CD4-positive, alpha-beta T cell (primary cell): ENCODE measurements at regions of chr16 and their contacts with region 1.

Region 1: GRCh38 chr16:2155091-2156021 is at the start of gene TRAF7:
- DNase-seq: peak; percentile 93 to 100 (median 95)
- ATAC-seq: peak; percentile 90
- H3K4me3 ChIP-seq: peak within 1 kb of the TSS; percentile 83
- H3K4me3 Mint-ChIP-seq: peak within 1 kb of the TSS; percentile 94
- H3K27ac ChIP-seq: peak within 1 kb of the TSS; percentile 64 to 68
- H3K27ac Mint-ChIP-seq: peak within 1 kb of the TSS; percentile 75
- H3K4me1 ChIP-seq: peaks cover 79% of the 10 kb centered on the region
- H3K4me1 Mint-ChIP-seq: peaks cover 51% of the 10 kb centered on the region
- H3K27me3 ChIP-seq: no peaks in the 10 kb centered on the region
- H3K27me3 Mint-ChIP-seq: no peaks in the 10 kb centered on the region
- CTCF ChIP-seq: no peak
- total RNA-seq, gene TRAF7: 19.9 to 24.0 TPM

Region 2: DNA sequence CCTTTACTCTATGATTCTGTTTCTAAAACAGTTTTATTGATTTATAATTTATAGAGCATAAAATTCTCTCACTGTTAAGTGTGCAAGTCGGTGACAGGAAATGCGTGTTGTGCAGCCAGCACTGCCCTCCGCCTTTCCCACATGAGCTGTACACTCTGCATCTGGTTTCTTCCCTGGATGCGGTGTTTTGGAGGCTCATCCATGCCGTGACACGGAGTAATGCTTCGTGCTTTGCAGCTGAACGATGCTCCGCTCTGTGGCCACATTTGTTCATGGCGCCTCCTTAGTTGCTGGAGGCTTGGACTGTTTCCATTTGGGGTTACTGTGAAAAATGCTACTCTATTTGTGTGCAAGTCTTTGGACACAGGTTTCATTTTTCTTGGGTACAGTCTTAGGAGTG is 354.7 kb before region 1 on chr16:
- CTCF ChIA-PET with region 1: no interaction called
- POLR2A ChIA-PET with region 1: no interaction called
- intact Hi-C with region 1: no loop called
- DNase-seq: no peak
- ATAC-seq: no peak
- H3K4me3 ChIP-seq: no peak overlapping the region
- H3K4me3 Mint-ChIP-seq: no peak overlapping the region
- H3K27ac ChIP-seq: no peak overlapping the region
- H3K27ac Mint-ChIP-seq: no peak overlapping the region
- H3K4me1 ChIP-seq: no peaks in the 10 kb centered on the region
- H3K4me1 Mint-ChIP-seq: no peaks in the 10 kb centered on the region
- H3K27me3 ChIP-seq: no peaks in the 10 kb centered on the region
- H3K27me3 Mint-ChIP-seq: no peaks in the 10 kb centered on the region
- CTCF ChIP-seq: no peak

Region 3: DNA sequence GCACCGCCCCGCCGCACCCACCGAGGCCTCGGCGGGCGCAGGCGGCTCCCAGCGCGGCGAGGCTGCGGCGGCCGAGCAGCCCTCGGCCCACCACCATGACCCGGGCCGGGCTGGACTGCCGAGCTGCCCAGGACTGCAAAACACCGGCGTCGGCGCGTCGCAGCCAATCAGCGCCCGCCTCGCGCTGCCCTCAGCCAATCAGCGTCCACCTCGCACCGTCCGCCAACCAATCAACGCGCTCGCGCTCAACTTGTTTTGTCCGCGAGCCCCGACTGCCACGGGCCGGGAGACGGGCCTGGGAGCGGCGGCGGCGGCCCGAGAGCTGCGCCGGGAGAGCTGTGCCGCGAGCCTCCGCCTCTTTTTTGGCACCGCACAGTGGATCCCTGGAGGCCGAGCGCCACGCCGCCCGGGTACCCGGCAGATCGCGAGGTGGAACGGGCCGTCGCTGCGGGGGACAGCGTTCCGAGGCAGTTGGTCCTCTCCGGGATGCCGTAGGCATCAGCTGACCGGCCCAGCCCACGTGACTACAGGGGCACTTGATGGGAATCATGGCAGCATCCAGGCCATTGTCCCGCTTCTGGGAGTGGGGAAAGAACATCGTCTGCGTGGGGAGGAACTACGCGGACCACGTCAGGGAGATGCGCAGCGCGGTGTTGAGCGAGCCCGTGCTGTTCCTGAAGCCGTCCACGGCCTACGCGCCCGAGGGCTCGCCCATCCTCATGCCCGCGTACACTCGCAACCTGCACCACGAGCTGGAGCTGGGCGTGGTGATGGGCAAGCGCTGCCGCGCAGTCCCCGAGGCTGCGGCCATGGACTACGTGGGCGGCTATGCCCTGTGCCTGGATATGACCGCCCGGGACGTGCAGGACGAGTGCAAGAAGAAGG is 328.4 kb before region 1 on chr16 and contains the starts of genes FAHD1 and HAGH:
- CTCF ChIA-PET with region 1: no interaction called
- POLR2A ChIA-PET with region 1: interaction called, 13 read pairs
- intact Hi-C with region 1: no loop called
- DNase-seq: peak; percentile 82 to 97 (median 88)
- ATAC-seq: peak; percentile 82
- H3K4me3 ChIP-seq: peak within 1 kb of the TSS; percentile 76
- H3K4me3 Mint-ChIP-seq: peak within 1 kb of the TSS; percentile 91
- H3K27ac ChIP-seq: peak within 1 kb of the TSS; percentile 72 to 77
- H3K27ac Mint-ChIP-seq: peak within 1 kb of the TSS; percentile 90
- H3K4me1 ChIP-seq: peaks cover 51% of the 10 kb centered on the region
- H3K4me1 Mint-ChIP-seq: peaks cover 37% of the 10 kb centered on the region
- H3K27me3 ChIP-seq: no peaks in the 10 kb centered on the region
- H3K27me3 Mint-ChIP-seq: no peaks in the 10 kb centered on the region
- CTCF ChIP-seq: no peak
- total RNA-seq, gene FAHD1: 4.1 to 4.5 TPM
- total RNA-seq, gene HAGH: 20.9 to 22.7 TPM

Region 4: DNA sequence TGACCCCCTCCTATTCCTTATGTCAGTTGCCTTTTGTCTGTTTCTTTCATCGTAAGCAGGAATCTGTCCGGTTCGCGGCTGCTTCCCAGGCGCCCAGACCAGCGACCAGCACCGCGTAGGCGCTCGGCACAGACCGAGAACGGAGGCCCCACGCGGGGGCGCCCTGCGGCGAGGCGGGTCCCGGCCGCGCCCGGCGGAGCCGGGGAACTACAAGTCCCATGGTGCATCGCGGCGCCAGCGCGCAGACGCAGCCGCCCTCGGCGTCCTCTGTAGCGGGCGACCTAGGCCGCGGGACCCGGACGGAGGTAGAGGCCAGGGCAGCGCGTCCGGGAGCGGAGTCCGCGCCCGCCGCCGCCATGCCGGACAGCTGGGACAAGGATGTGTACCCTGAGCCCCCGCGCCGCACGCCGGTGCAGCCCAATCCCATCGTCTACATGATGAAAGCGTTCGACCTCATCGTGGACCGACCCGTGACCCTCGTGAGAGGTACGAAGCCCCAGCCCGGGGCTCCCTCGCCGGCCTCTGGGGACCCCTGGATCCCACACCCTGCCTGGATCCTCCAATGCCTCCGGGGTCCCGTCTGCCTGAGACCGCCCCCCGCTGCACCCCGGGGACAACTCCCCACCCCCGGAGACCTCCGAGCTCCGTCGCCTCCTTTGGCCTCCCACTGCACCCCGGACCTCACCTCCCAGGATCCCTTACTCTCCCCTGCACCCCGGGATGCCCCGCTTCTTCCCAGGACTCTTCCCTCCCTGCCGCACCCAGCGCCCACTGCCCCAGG is 195.9 kb before region 1 on chr16 and contains the start of gene NDUFB10:
- CTCF ChIA-PET with region 1: interaction called, 4 read pairs
- POLR2A ChIA-PET with region 1: interaction called, 41 read pairs
- intact Hi-C with region 1: loop called in 1 of 2 experiments (anchors 1 kb)
- DNase-seq: peak; percentile 81 to 96 (median 92)
- ATAC-seq: peak; percentile 86
- H3K4me3 ChIP-seq: peak within 1 kb of the TSS; percentile 94
- H3K4me3 Mint-ChIP-seq: peak within 1 kb of the TSS; percentile 91
- H3K27ac ChIP-seq: peak within 1 kb of the TSS; percentile 66 to 72
- H3K27ac Mint-ChIP-seq: peak within 1 kb of the TSS; percentile 98
- H3K4me1 ChIP-seq: peaks cover 55% of the 10 kb centered on the region
- H3K4me1 Mint-ChIP-seq: peaks cover 42% of the 10 kb centered on the region
- H3K27me3 ChIP-seq: no peaks in the 10 kb centered on the region
- H3K27me3 Mint-ChIP-seq: no peaks in the 10 kb centered on the region
- CTCF ChIP-seq: peak; percentile 83
- total RNA-seq, gene NDUFB10: 40.7 to 41.1 TPM

Region 5: DNA sequence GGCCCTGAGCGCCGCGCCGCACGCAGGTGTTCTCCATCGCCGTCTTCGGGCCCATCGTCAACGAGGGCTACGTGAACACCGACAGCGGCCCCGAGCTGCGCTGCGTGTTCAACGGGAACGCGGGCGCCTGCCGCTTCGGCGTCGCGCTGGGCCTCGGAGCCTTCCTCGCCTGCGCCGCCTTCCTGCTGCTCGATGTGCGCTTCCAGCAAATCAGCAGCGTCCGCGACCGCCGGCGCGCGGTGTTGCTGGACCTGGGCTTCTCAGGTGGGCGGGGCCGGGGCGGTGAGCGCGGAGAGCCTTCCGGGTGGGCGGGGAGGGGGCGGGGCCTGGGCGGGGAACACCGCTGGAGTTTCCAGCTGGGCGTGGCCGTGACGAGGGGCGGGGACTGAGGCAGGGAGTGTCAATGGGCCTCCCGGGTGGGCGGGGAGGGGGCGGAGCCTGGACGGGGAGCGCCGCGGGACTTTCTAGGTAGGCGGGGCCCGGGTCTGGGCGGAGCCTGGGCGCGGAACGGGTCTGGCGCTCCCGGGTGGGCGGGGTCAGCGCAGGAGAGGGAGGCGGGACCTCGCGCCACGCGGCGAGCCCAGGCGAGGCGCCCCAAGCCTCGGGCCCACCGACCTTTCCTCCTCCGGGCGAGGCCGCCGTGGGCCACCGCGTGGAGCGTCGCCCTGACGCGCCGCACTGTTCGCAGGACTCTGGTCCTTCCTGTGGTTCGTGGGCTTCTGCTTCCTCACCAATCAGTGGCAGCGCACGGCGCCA is 163.2 kb before region 1 on chr16:
- CTCF ChIA-PET with region 1: no interaction called
- POLR2A ChIA-PET with region 1: interaction called, 27 read pairs
- intact Hi-C with region 1: no loop called
- DNase-seq: peak; percentile 95 to 100 (median 98)
- ATAC-seq: peak; percentile 86
- H3K4me3 ChIP-seq: peak overlapping the region; percentile 55
- H3K4me3 Mint-ChIP-seq: peak overlapping the region; percentile 65
- H3K27ac ChIP-seq: peak overlapping the region in 1 of 2 donors; percentile 56
- H3K27ac Mint-ChIP-seq: peak overlapping the region; percentile 79
- H3K4me1 ChIP-seq: peaks cover 26% of the 10 kb centered on the region
- H3K4me1 Mint-ChIP-seq: peaks cover 26% of the 10 kb centered on the region
- H3K27me3 ChIP-seq: peaks cover 13 to 15% of the 10 kb centered on the region in 2 experiments
- H3K27me3 Mint-ChIP-seq: peaks cover 20% of the 10 kb centered on the region
- CTCF ChIP-seq: no peak

Region 6: DNA sequence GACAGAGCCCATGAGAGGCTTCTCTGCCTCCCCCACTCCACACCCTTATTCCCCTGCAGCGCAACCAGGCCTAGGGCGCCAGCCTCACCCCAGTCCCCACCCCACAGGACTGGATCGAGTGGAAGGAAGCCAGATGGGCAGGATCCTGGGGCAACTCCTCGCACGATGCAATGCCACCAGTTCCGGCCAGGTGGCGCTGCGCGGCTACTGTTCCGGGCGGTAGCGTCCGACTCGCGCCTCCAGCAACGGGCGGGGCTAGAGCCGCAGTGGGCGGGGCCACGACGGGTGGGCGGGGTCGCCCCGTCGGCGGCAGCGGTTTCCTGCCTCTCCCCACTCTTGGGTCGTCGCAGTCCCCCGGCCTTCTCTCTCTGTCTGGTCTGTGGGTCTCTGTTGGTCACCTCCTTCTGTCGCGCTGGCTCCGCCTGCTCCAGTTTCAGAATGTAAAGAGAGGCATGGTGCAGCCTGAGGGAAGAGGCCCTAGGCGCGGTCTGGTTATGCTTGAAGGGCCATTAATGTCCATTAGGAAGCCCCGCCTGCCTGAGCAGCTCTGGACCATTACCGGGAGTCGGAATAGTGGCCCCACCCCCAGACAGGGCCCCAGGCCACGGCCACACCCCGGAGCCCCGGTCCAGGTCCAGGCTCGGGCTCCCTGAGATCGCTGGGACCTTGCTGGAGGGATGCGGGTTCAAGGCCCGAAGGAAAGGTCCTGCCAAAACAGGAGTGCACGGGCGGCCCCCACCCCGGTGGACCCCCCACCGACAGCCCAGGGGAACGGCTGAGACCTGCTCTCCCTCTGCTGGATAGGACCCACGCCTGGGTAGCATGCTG is 132.0 kb before region 1 on chr16:
- CTCF ChIA-PET with region 1: interaction called, 5 read pairs
- POLR2A ChIA-PET with region 1: interaction called, 13 read pairs
- intact Hi-C with region 1: loop called (anchors 1 kb)
- DNase-seq: peak; percentile 87 to 99 (median 96)
- ATAC-seq: peak; percentile 92
- H3K4me3 ChIP-seq: peak overlapping the region; percentile 31
- H3K4me3 Mint-ChIP-seq: peak overlapping the region; percentile 72
- H3K27ac ChIP-seq: peak overlapping the region in 1 of 2 donors; percentile 43
- H3K27ac Mint-ChIP-seq: peak overlapping the region; percentile 66
- H3K4me1 ChIP-seq: peaks cover 50% of the 10 kb centered on the region
- H3K4me1 Mint-ChIP-seq: peaks cover 19% of the 10 kb centered on the region
- H3K27me3 ChIP-seq: peaks cover 25 to 33% of the 10 kb centered on the region in 2 experiments
- H3K27me3 Mint-ChIP-seq: peaks cover 29% of the 10 kb centered on the region
- CTCF ChIP-seq: peak; percentile 90

Region 7: DNA sequence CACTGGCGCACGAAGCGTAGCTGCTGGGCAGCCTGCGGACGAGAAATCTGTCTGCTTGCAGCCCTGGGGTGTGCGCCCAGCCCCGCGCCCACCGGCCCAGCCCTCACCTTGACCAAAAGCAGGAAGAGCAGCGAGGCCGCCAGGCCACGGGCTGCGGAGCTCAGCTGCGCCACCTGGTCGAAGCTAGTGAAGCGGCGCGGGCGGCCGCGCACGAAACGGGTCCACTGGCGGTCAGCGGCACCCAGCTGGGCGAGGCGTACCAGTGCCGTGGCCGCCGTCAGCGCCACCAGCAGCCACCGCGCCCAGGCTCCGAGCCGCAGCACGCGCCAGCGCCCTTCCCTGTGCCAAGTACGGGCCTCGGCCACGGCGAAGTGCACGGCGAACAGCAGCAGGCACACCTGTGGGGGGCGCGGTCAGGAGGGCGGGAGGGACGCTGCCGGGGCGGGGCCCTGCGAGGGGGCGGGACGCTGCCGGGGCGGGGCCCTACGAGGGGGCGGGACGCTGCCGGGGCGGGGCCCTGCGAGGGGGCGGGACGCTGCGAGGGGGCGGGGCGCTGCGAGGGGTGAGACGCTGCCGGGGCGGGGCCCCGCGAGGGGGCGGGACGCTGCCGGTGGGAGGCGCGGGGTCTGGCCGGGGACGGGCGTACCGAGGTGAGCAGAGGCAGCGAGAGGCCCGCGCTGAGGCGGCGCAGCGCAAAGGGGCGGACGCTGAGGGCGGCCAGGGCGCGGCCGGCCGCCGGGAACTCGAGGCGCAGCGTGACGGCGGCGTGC is 64.4 kb before region 1 on chr16:
- CTCF ChIA-PET with region 1: no interaction called
- POLR2A ChIA-PET with region 1: no interaction called
- intact Hi-C with region 1: no loop called
- DNase-seq: peak in 5 of 14 experiments; percentile 13 to 56 (median 40)
- ATAC-seq: no peak
- H3K4me3 ChIP-seq: no peak overlapping the region
- H3K4me3 Mint-ChIP-seq: no peak overlapping the region
- H3K27ac ChIP-seq: no peak overlapping the region
- H3K27ac Mint-ChIP-seq: no peak overlapping the region
- H3K4me1 ChIP-seq: no peaks in the 10 kb centered on the region
- H3K4me1 Mint-ChIP-seq: no peaks in the 10 kb centered on the region
- H3K27me3 ChIP-seq: no peaks in the 10 kb centered on the region
- H3K27me3 Mint-ChIP-seq: no peaks in the 10 kb centered on the region
- CTCF ChIP-seq: no peak

Region 8: GRCh38 chr16:2213817-2214720 is 58.7 kb after region 1 on chr16:
- CTCF ChIA-PET with region 1: interaction called, 5 read pairs
- POLR2A ChIA-PET with region 1: interaction called, 22 read pairs
- intact Hi-C with region 1: no loop called
- DNase-seq: no peak
- ATAC-seq: no peak
- H3K4me3 ChIP-seq: peak overlapping the region; percentile 34
- H3K4me3 Mint-ChIP-seq: peak overlapping the region; percentile 85
- H3K27ac ChIP-seq: peak overlapping the region in 1 of 2 donors; percentile 21
- H3K27ac Mint-ChIP-seq: peak overlapping the region; percentile 66
- H3K4me1 ChIP-seq: peaks cover 25% of the 10 kb centered on the region
- H3K4me1 Mint-ChIP-seq: peaks cover 11% of the 10 kb centered on the region
- H3K27me3 ChIP-seq: no peaks in the 10 kb centered on the region
- H3K27me3 Mint-ChIP-seq: no peaks in the 10 kb centered on the region
- CTCF ChIP-seq: no peak

Region 9: DNA sequence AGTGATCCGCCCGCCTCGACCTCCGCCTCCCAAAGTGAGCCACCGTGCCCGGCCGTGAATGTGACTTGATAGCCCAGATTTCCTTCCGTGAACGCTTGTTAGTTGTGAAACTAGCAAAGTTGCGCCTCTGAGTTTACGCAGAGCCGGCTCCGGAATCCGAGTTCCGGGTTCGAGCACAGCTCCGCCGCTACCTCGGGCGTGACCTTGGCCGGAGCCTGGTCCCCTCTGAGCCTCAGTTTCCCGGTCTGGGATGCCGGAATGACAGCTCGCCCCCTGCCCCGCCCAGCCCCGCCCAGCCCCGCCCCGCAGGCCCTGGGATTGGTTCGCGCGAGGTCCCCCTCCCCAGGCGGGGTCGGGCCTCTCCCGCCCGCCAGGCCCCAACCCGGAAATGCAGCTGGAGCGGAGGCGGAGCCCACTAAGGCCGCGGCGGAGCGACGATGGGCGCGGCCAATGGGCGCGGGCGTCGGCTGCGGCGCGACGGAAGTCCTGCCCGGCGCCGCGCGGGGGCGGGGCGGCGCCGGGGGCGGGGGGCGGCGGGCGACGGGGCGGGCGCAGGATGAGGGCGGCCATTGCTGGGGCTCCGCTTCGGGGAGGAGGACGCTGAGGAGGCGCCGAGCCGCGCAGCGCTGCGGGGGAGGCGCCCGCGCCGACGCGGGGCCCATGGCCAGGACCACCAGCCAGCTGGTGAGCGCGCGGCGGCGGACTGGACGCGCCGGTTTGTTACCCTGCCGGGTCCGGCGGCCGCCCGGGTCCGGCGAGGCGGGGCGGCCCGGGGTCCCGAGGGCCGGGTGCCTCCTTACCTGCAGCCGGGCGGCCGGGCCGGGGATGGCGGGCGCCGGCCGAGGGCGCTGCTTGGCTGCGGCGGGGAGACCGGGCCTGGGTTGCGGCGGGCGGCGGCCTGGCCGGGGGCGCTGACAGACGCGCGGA is 382.4 kb after region 1 on chr16 and contains the start of gene PDPK1:
- CTCF ChIA-PET with region 1: no interaction called
- POLR2A ChIA-PET with region 1: interaction called, 10 read pairs
- intact Hi-C with region 1: no loop called
- DNase-seq: peak; percentile 85 to 98 (median 92)
- ATAC-seq: peak; percentile 87
- H3K4me3 ChIP-seq: peak within 1 kb of the TSS; percentile 72
- H3K4me3 Mint-ChIP-seq: peak within 1 kb of the TSS; percentile 92
- H3K27ac ChIP-seq: peak within 1 kb of the TSS in 1 of 2 donors; percentile 68
- H3K27ac Mint-ChIP-seq: peak within 1 kb of the TSS; percentile 94
- H3K4me1 ChIP-seq: peaks cover 53% of the 10 kb centered on the region
- H3K4me1 Mint-ChIP-seq: peaks cover 37% of the 10 kb centered on the region
- H3K27me3 ChIP-seq: no peaks in the 10 kb centered on the region
- H3K27me3 Mint-ChIP-seq: peaks cover 3% of the 10 kb centered on the region
- CTCF ChIP-seq: no peak
- total RNA-seq, gene PDPK1: 46.1 to 51.1 TPM